H1 (cell line): ENCODE measurements at regions of chr20 and their contacts with region 1.

Region 1: DNA sequence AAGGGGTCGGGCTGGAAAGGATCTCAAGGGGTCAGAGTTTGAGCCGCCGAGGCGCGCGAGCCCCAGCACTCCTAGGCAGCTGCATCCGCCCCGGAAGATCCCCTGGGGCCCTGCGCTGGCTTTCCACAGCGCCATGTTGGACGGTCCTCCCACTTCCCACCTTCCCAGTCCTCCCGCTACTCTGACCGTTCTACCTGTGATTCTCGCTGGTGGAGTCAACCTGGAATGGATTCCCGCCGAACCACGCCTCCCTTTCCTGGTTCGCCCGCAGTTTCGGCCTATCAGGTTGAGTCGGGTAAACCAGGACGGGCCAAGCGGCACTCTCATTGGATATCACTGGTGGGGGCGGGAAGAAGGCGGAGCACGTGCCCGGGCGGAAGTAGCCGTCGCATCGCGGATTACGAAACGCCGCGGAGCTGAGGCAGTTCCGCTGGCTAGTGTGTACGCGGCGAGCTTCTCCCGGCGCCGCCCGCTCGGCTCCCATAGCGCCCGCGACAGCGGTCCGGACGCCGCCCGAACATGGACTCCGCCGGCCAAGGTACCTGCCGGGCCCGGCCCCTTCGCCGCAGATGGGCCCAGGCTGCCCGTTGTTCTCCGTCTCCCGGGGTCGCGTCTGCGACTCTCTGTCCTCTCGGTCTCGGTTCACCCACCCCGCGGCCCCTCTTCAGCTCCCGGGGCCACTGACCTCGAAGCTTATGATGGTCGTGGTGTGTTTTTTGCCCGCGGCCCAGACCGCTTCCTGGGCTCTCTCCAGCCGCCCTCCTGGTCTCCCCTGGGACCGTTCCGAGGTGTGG is at the start of gene TPD52L2:
- DNase-seq: peak; percentile 96 to 98
- H3K4me3 ChIP-seq: peak within 1 kb of the TSS; percentile 82 to 95 (median 92)
- H3K27ac ChIP-seq: peak within 1 kb of the TSS; percentile 69; the same call in 1 of the 2 replicates
- H3K4me1 ChIP-seq: peaks cover 0 to 9% (median 4%) of the 10 kb centered on the region in 4 experiments; a peak in 5 of 7 replicates
- H3K27me3 ChIP-seq: no peaks in the 10 kb centered on the region
- CTCF ChIP-seq: no peak
- EP300 ChIP-seq: no peak
- POLR2A ChIP-seq: peak; percentile 91 to 97
- RAD21 ChIP-seq: no peak
- total RNA-seq, gene TPD52L2: 77.1 and 78.1 TPM in 2 replicates

Region 2: DNA sequence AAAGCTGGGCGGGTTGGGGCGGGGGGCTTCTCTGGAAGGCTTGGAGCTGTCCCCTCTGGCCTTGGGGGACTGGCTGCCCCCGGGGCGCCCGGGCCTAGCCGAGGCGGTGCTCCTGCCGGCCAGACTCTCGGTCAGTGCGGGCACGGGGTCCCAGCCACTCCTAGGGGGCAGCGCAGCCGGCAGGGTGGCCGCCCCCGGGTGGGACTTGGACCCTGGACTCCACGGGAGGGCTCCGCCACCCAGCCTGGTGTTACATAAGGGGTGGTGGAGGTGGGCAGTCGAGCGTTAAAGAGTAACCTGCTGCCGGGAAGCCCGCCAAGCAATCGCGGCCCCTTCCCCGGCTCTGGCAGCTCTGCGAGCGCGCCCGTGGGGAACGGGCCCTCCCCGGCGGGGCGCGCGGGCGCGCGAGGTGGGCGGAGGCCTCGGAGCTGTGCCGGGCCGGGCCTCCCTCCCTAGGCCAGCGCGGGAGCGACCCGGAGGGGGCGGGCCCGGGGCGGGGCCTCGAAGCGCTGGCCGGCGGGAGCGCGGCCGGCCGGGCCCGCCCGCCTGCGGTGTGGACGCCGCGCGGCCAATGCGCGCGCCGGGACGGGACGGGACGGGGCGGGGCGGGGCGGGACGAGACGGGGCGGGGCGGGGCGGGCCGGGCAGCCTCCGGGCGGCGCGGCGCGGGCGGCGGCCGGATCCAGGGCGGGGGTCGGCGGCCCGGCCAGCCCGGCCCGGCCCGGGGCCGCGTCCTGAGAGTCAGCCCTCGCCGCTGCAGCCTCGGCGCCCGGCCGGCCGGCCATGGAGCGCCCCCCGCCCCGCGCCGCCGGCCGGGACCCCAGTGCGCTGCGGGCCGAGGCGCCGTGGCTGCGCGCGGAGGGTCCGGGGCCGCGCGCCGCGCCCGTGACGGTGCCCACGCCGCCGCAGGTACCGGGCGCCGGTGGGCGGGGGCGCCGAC is 125.6 kb before region 1 on chr20 and contains the start of gene SLC2A4RG:
- CTCF ChIA-PET with region 1: interaction called, 6 read pairs
- POLR2A ChIA-PET with region 1: interaction called, 11 read pairs
- DNase-seq: peak in 1 of 2 experiments; percentile 79
- H3K4me3 ChIP-seq: peak within 1 kb of the TSS; percentile 49 to 83 (median 60)
- H3K27ac ChIP-seq: no peak within 1 kb of the TSS
- H3K4me1 ChIP-seq: peaks cover 0 to 20% (median 11%) of the 10 kb centered on the region in 4 experiments; a peak in 6 of 7 replicates
- H3K27me3 ChIP-seq: peaks cover 0 to 12% (median 8%) of the 10 kb centered on the region in 4 experiments; a peak in 4 of 7 replicates
- CTCF ChIP-seq: no peak
- EP300 ChIP-seq: no peak
- POLR2A ChIP-seq: no peak
- RAD21 ChIP-seq: no peak
- total RNA-seq, gene SLC2A4RG: 25.0 and 29.1 TPM in 2 replicates

Region 3: GRCh38 chr20:63846128-63846798 is 18.8 kb before region 1 on chr20:
- CTCF ChIA-PET with region 1: interaction called, 14 read pairs
- POLR2A ChIA-PET with region 1: interaction called, 52 read pairs
- DNase-seq: peak in 1 of 2 experiments; percentile 80
- H3K4me3 ChIP-seq: peak overlapping the region; percentile 25 to 60 (median 37)
- H3K27ac ChIP-seq: peak overlapping the region; percentile 49; the same call in 1 of the 2 replicates
- H3K4me1 ChIP-seq: peaks cover 6 to 29% (median 23%) of the 10 kb centered on the region in 4 experiments
- H3K27me3 ChIP-seq: no peaks in the 10 kb centered on the region
- CTCF ChIP-seq: no peak
- EP300 ChIP-seq: no peak
- POLR2A ChIP-seq: peak in 1 of 2 experiments; percentile 63; a peak in 1 of 3 replicates
- RAD21 ChIP-seq: no peak; a peak in 1 of 4 replicates

Region 4: DNA sequence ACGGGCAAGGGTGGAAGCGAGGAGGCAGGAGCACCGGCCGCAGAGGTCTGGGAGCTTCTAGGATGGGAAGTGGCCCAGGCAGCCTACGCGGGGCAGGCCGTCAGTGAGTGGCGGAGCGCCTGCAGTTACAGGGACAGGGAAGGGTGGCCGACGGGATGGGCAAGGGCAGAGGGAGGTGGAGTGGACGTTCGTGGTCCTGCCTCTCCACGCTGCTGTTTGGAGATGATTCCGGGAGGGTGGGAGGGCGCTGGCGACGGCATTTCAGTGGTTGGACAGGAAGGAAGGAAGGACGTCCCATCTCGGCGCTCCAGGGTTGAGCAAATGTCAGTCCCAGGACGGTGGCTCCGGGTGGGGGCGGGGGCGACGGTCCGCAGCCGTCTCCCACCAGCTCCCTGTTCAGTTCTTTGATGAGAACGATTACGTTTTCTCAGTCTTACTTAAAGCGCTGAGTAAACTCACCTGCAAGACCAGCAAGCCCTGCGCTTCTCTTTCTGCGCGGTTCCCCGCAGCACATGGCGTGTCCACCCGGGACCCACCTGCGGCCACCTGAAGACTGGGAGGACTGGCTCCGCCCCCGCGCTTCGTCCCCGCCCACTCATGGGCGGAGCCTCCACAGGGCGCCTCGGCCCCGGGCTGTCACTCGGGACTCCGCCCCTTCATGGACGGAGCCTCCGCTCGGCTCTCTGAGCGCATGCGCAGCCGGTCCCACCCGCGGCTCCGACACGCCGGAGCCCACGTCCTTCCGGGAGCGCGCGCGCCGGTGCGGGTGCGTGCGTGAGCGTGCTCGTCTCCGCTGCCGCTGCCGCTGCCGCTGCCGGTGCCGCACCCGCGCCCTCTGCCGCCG is 29.5 kb after region 1 on chr20 and contains the start of gene DNAJC5:
- CTCF ChIA-PET with region 1: interaction called, 4 read pairs
- POLR2A ChIA-PET with region 1: interaction called, 23 read pairs
- DNase-seq: peak; percentile 78 to 99
- H3K4me3 ChIP-seq: peak within 1 kb of the TSS; percentile 57 to 85 (median 60)
- H3K27ac ChIP-seq: no peak within 1 kb of the TSS
- H3K4me1 ChIP-seq: peaks cover 0 to 6% (median 4%) of the 10 kb centered on the region in 4 experiments; a peak in 4 of 7 replicates
- H3K27me3 ChIP-seq: no peaks in the 10 kb centered on the region
- CTCF ChIP-seq: no peak
- EP300 ChIP-seq: no peak; a peak in 1 of 3 replicates
- POLR2A ChIP-seq: peak in 1 of 2 experiments; percentile 45; a peak in 1 of 3 replicates
- RAD21 ChIP-seq: no peak
- total RNA-seq, gene DNAJC5: 31.2 and 32.8 TPM in 2 replicates

Region 5: GRCh38 chr20:63980806-63981728 is 116.0 kb after region 1 on chr20 and contains the start of gene PRPF6:
- CTCF ChIA-PET with region 1: interaction called, 5 read pairs
- POLR2A ChIA-PET with region 1: interaction called, 13 read pairs
- DNase-seq: peak; percentile 94 to 95
- H3K4me3 ChIP-seq: peak within 1 kb of the TSS; percentile 68 to 89 (median 83)
- H3K27ac ChIP-seq: peak within 1 kb of the TSS; percentile 88
- H3K4me1 ChIP-seq: peaks cover 4 to 24% (median 12%) of the 10 kb centered on the region in 4 experiments; a peak in 6 of 7 replicates
- H3K27me3 ChIP-seq: peaks cover 0 to 9% (median 2%) of the 10 kb centered on the region in 4 experiments; a peak in 3 of 7 replicates
- CTCF ChIP-seq: peak; percentile 97 to 100 (median 98)
- EP300 ChIP-seq: peak in 1 of 2 experiments; percentile 36; a peak in 1 of 3 replicates
- POLR2A ChIP-seq: peak in 1 of 2 experiments; percentile 87; a peak in 2 of 3 replicates
- RAD21 ChIP-seq: peak; percentile 35 to 47; a peak in 3 of 4 replicates
- total RNA-seq, gene PRPF6: 76.9 and 80.7 TPM in 2 replicates